ENCODE measurements at regions of chr3 and their contacts with region 1.

Region 1: DNA sequence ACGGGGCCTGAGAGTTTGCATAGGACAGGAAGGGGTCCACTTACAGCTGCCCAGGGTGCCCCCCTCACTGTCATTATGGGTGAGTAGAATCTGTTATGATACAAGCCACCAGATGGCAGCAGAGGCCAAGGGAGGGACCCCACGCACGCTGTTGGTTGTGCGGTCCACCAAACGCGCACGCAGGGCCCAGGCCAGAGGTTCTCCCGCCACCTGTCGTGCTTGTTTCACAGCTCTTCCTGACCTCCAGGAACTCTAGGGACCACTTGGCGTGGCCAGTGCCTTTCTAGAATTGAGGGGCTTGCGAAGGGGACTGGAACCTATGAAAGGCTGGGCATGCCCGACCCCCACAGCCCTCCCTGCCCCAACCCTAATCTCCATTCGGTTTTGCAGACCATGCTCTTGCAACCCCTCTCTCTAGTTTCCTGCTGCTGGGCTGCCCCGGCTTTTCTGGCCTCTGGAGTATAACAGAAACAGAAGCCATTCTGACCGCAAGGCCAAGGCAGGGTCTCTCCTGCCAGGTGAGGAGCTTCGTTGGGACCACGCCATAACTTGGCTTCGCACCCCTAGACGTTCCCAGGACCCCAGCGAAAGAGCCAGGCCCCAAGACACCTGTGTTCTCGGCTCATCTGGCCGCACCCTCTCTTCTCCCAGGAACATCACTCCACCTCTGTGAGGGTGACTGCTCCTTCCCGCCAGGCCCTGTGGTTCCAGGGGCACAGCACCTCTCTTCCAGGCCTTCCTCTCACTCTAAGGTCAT is 46.0 kb downstream of the ALDH1L1 start:
- DNase-seq: peak; percentile 85
- H3K4me3 Mint-ChIP-seq: no peak overlapping the region
- H3K27ac Mint-ChIP-seq: no peak overlapping the region
- H3K4me1 Mint-ChIP-seq: peaks cover 9% of the 10 kb centered on the region
- H3K27me3 Mint-ChIP-seq: peaks cover 16% of the 10 kb centered on the region
- CTCF ChIP-seq: peak; percentile 99

Region 2: DNA sequence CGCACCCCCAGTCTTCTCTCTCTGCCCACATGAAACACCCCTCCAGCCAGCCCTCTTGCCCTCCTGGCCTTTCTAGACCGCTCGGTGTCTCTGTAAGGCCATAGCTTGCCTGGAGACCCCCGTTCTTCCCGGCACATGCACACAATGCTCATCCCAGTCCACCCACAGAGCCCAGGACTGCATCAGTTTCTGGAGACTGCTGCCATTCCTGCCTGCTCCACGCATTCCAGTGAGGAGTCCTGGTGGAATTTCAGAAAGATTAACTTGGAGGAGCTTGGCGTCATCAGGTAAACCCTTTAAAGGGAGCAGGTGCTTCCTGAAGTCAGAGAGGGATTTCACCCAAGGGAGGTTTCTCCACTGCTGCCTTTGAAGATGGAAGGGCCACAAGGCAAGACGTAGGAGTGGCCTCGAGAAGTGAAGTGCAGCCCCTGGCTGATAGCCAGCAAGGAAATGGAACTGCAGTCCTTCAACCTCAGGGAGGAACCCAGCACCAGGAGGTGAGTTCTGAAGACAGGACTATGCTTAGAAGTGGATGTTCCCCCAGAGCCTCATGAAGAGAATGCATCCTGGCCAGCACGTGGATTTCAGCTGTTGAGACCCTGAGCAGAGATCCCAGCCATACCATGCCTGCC is 69.7 kb before region 1 on chr3:
- CTCF ChIA-PET with region 1: no interaction called
- intact Hi-C with region 1: no loop called
- DNase-seq: peak; percentile 73
- H3K4me3 Mint-ChIP-seq: no peak overlapping the region
- H3K27ac Mint-ChIP-seq: no peak overlapping the region
- H3K4me1 Mint-ChIP-seq: peaks cover 9% of the 10 kb centered on the region
- H3K27me3 Mint-ChIP-seq: no peaks in the 10 kb centered on the region
- CTCF ChIP-seq: no peak

Region 3: DNA sequence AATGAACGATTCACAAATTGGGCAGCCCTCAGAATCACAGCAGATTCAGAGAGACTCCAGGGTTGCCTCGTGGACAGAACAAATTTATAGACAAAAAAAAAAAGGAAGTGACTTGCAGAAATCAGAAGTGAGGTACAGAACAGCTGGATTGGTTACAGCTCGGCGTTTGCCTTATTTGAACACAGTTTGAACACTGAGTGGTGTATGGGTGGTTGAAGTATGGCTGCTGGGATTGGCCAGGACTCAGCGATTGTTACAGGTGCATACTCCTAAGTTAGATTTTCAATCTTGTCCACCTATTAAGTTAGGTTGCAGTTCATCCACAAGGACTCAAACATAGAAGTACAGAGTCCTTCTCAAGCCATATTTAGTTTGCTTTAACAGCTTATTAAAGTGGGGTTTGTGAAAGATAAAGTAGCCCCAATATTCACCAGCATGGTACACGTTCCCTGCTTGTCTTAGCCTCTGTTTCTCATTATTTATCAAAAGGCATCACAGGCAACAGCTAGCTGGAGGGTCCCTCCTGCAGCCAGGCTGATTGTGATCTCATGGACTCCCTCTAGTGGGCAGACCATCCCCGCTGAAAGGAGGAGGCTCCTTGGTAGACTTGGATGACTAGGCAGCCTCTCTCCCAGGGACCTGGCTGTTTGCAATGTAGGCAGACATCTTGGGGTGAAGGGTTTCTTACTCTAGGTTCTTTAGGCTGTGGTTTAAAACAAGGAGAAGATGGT is 63.6 kb after region 1 on chr3:
- CTCF ChIA-PET with region 1: interaction called, 12 read pairs
- intact Hi-C with region 1: loop called (anchors 1 kb)
- DNase-seq: peak; percentile 89
- H3K4me3 Mint-ChIP-seq: no peak overlapping the region
- H3K27ac Mint-ChIP-seq: no peak overlapping the region
- H3K4me1 Mint-ChIP-seq: peaks cover 15% of the 10 kb centered on the region
- H3K27me3 Mint-ChIP-seq: no peaks in the 10 kb centered on the region
- CTCF ChIP-seq: peak; percentile 80

Region 4: GRCh38 chr3:126212602-126213378 is 78.4 kb after region 1 on chr3:
- CTCF ChIA-PET with region 1: interaction called, 3 read pairs
- intact Hi-C with region 1: loop called (anchors 5 kb)
- DNase-seq: peak; percentile 74
- H3K4me3 Mint-ChIP-seq: peak overlapping the region; percentile 66
- H3K27ac Mint-ChIP-seq: peak overlapping the region; percentile 52
- H3K4me1 Mint-ChIP-seq: peaks cover 55% of the 10 kb centered on the region
- H3K27me3 Mint-ChIP-seq: no peaks in the 10 kb centered on the region
- CTCF ChIP-seq: peak; percentile 46

Region 5: DNA sequence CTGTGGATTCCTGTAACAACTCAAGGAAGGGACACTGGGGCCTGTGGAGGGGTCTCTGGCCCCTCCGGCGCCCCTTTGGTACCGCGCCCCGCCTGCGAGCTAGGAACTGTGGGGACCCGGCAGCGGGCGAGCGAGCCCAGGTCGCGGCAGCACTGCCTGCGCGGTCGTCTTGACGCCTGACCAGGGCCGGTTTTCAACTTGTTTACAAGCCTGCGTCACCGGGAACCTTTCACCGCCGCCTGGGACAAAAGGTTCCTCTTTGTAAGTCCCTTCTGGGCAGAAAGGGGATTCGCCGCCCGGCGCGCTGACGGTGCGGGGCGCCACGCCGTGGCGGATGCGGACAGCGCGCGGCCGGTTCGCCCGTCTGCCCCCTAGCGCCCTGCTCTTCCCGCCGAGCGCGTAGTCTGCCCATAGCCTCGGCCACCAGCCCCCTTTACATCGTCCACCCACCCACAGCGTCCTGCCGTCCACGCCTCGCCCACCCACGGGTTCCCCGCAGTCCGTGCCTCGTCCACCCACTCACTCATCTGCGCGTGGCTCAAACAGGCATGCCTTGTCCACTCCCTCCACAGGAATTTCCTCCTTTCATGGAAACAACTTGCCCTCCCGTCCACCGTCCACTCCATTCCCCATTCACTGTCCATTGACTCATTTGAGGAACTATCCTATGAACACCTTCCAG is 254.9 kb after region 1 on chr3:
- CTCF ChIA-PET with region 1: interaction called, 12 read pairs
- intact Hi-C with region 1: loop called (anchors 1 kb)
- DNase-seq: peak; percentile 96
- H3K4me3 Mint-ChIP-seq: peak overlapping the region; percentile 71
- H3K27ac Mint-ChIP-seq: peak overlapping the region; percentile 90
- H3K4me1 Mint-ChIP-seq: peaks cover 18% of the 10 kb centered on the region
- H3K27me3 Mint-ChIP-seq: peaks cover 48% of the 10 kb centered on the region
- CTCF ChIP-seq: peak; percentile 98

Region 6: GRCh38 chr3:126475413-126476114 is 341.2 kb after region 1 on chr3 and contains the start of gene ZXDC:
- CTCF ChIA-PET with region 1: interaction called, 3 read pairs
- intact Hi-C with region 1: loop called (anchors 1 kb)
- DNase-seq: peak; percentile 99
- H3K4me3 Mint-ChIP-seq: peak within 1 kb of the TSS; percentile 76
- H3K27ac Mint-ChIP-seq: peak within 1 kb of the TSS; percentile 84
- H3K4me1 Mint-ChIP-seq: peaks cover 35% of the 10 kb centered on the region
- H3K27me3 Mint-ChIP-seq: peaks cover 7% of the 10 kb centered on the region
- CTCF ChIP-seq: peak; percentile 46
- total RNA-seq, gene ZXDC: 62.3 and 63.8 TPM in 2 replicates

Measured in Calu3 (cell line).